ENCODE measurements at regions of chr6 and their contacts with region 1.

Region 1: DNA sequence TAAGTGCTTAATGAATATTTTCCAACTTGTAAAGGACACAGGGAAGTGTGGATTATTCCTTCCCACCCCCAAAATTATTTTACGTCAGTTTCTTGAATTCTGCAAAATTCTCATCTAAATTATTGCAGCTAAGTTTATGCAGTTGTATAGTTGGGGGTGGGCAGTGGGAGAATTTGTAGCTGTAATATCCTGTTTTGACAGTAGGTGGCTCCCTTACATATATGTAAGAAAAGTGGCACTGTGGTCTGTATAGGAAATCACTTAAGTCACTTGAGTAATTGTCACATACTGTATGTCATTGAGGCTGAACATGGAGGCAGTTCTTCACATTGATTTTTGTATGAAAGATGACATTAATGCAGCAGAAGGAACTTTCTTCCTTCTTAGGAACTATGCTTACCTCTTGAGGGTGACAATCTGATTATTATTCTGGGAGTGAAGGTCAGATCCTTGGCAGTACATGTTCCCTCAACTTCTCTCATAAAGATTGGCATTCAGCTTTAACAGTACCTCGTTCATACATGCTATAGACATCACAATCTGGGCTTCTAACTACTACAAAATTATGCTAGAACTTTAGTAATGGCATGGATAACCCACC is 14.7 kb upstream of the CFAP206 start:
- DNase-seq: no peak

Region 2: DNA sequence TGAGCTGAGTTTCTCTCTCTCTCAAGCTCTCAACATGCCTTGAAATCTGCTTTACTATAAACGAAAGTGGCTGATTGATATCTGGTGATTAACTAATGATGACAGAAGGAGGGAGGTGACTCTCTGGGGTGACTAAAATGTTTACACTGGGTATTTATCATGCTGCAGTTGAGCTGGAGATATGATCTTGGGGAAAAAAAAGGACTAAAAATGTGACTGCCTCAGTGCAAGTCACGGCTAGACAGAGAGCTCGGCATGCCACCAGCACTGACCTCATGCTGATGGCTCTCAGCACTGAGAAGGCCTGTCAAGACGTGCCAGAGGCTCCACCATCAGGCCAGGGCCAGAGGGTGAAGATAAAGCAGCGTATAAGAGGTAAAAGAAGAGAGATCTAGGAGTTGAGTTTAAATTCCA is 551.4 kb after region 1 on chr6:
- intact Hi-C with region 1: loop called (anchors 10 kb)
- DNase-seq: peak; percentile 86